Left ventricle myocardium superior (tissue), 1 donor: ENCODE measurements at regions of chr14 and their contacts with region 1.

Region 1: GRCh38 chr14:60628892-60629291 is 20.4 kb downstream of the SIX1 start:
- DNase-seq: no peak
- ATAC-seq: no peak

Region 2: GRCh38 chr14:60724137-60724619 is 95.3 kb after region 1 on chr14 and contains the start of gene SIX4:
- intact Hi-C with region 1: no loop called
- DNase-seq: peak; percentile 77
- ATAC-seq: peak; percentile 94
- total RNA-seq, gene SIX4: 1.6 TPM

Region 3: DNA sequence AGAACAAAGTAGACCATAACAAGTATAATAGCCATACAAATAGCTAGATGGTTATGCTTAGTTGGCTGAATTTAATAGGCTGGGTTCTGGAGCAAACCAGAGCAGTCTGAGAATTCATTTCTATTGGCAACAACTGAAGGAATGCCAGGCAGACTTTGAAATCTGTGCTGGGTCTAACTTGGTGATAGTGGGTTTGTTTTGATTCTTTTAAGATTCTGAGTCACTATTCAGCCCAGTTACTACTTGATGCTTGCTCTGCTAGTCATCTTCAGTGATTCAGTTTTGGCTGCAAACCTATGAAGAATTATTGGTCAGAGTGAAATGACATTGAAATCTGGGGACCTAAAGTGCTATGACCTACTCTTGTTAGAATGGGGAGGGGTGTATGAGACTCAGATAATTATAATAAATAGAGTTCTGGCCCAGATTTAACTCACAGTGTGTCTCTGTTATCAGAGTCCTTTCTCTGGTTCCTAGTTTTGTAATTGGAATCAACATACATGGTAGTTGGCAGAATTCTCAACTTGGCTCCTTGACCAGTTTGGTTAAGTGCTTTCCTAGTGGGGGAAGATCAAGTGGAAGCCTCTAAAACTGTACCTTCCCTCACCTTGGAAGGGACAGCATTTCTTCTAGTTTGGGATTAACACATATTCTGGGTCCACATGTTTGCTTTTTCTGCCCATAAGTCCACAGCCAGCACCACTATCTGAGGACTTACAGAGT is 149.1 kb after region 1 on chr14:
- intact Hi-C with region 1: no loop called
- DNase-seq: no peak
- ATAC-seq: peak; percentile 63

Region 4: GRCh38 chr14:61025251-61026223 is 396.6 kb after region 1 on chr14:
- intact Hi-C with region 1: loop called (anchors 2 kb)
- DNase-seq: peak; percentile 44
- ATAC-seq: peak; percentile 47